Activated CD4-positive, alpha-beta T cell treated with anti-CD3 and anti-CD28 coated beads for 36 hours (primary cell): ENCODE measurements at regions of chr16 and their contacts with region 1.

Region 1: GRCh38 chr16:3305109-3306068 is at the starts of genes TIGD7 and ZNF75A:
- DNase-seq: peak; percentile 90
- ATAC-seq: peak; percentile 99
- H3K4me3 Mint-ChIP-seq: peak within 1 kb of the TSS; percentile 75
- H3K27ac Mint-ChIP-seq: peak within 1 kb of the TSS; percentile 84
- H3K4me1 Mint-ChIP-seq: peaks cover 15% of the 10 kb centered on the region
- H3K27me3 Mint-ChIP-seq: no peaks in the 10 kb centered on the region
- total RNA-seq, gene TIGD7: 2.9 TPM
- total RNA-seq, gene ZNF75A: 23.2 to 27.4 TPM

Region 2: GRCh38 chr16:3134564-3135417 is 170.6 kb before region 1 on chr16 and contains the start of gene ZNF213:
- CTCF ChIA-PET with region 1: no interaction called
- POLR2A ChIA-PET with region 1: no interaction called
- intact Hi-C with region 1: no loop called
- DNase-seq: peak; percentile 96
- ATAC-seq: peak; percentile 97
- H3K4me3 Mint-ChIP-seq: peak within 1 kb of the TSS; percentile 98
- H3K27ac Mint-ChIP-seq: peak within 1 kb of the TSS; percentile 95
- H3K4me1 Mint-ChIP-seq: peaks cover 30% of the 10 kb centered on the region
- H3K27me3 Mint-ChIP-seq: no peaks in the 10 kb centered on the region
- total RNA-seq, gene ZNF213: 7.6 to 8.3 TPM

Region 3: DNA sequence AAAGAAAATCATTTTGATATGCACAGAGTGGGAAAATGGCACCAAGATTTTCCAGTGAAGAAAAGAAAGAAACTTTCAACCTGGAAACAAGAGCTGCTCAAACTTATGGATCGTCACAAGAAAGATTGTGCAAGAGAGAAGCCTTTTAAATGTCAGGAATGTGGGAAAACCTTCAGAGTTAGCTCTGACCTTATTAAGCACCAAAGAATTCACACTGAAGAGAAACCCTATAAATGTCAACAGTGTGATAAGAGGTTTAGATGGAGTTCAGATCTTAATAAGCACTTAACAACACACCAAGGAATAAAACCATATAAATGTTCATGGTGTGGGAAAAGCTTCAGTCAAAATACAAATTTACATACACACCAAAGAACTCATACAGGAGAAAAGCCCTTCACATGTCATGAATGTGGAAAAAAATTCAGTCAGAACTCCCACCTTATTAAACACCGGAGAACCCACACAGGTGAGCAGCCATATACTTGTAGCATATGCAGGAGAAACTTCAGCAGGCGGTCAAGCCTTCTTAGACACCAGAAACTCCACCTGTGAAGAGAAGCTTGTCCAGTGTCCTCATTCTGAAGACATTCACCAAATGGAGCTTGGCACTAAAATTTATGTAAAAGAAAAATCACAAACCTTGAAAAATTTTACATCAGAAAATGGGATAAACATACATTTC is 12.1 kb after region 1 on chr16:
- CTCF ChIA-PET with region 1: interaction called, 3 read pairs
- POLR2A ChIA-PET with region 1: no interaction called
- intact Hi-C with region 1: loop called in 1 of 2 experiments (anchors 1 kb)
- DNase-seq: no peak
- ATAC-seq: no peak
- H3K4me3 Mint-ChIP-seq: no peak overlapping the region
- H3K27ac Mint-ChIP-seq: no peak overlapping the region
- H3K4me1 Mint-ChIP-seq: no peaks in the 10 kb centered on the region
- H3K27me3 Mint-ChIP-seq: no peaks in the 10 kb centered on the region

Region 4: GRCh38 chr16:3364774-3365427 is 59.5 kb after region 1 on chr16:
- CTCF ChIA-PET with region 1: no interaction called
- POLR2A ChIA-PET with region 1: no interaction called
- intact Hi-C with region 1: loop called in 1 of 2 experiments (anchors 1 kb)
- DNase-seq: peak; percentile 94
- ATAC-seq: peak; percentile 98
- H3K4me3 Mint-ChIP-seq: peak overlapping the region; percentile 76
- H3K27ac Mint-ChIP-seq: peak overlapping the region; percentile 91
- H3K4me1 Mint-ChIP-seq: peaks cover 8% of the 10 kb centered on the region
- H3K27me3 Mint-ChIP-seq: peaks cover 6% of the 10 kb centered on the region

Region 5: GRCh38 chr16:3383045-3383448 is 77.7 kb after region 1 on chr16:
- CTCF ChIA-PET with region 1: no interaction called
- POLR2A ChIA-PET with region 1: no interaction called
- intact Hi-C with region 1: loop called in 1 of 2 experiments (anchors 5 kb)
- DNase-seq: no peak
- ATAC-seq: no peak
- H3K4me3 Mint-ChIP-seq: no peak overlapping the region
- H3K27ac Mint-ChIP-seq: no peak overlapping the region
- H3K4me1 Mint-ChIP-seq: no peaks in the 10 kb centered on the region
- H3K27me3 Mint-ChIP-seq: no peaks in the 10 kb centered on the region

Region 6: DNA sequence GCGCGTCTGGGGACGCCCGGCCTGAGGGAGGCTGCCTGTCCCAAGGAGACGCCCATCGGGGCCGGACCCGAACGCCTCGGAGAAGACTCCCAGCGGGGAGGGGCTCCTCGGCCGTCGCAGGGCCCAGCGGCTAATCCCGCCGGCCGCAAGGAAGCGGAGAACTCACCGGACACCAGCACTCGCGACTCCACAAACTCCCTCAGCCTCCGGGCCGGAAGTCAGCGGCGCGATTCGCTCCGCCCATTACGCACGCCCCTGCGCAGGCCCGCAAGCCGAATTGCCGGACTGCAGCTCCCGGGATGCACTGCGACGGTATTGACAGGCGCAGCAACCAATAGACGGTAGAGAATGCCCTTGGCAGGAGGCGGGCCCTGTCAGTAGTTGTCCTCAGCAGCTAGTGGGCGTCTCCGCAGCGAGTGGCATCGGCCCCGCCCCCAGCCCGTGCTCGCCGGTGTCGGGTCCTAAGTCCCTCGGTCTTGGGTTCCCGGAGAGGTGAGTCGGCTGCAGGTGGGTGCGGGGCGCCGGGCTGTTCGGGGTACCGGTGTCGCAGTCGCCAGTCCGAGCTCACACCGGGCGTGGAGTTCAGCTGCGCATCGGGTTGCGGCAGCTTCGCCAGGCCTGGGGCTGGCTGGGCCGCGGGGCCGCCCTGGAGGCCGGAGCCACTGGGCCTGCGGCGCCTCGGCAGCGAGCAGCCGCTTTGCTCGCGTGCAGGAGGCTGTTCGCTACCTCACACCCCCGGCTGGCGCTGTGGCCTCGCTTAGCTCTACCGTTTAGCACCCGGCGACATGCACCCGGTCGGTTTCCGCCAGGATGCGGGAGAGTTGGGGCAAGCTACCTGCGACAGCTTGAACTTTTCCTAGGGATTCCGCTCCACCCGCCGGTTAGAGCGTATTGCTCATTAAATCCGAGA is 95.6 kb after region 1 on chr16 and contains the starts of genes ZNF174 and ZSCAN32:
- CTCF ChIA-PET with region 1: no interaction called
- POLR2A ChIA-PET with region 1: no interaction called
- intact Hi-C with region 1: loop called in 1 of 2 experiments (anchors 1 kb)
- DNase-seq: peak; percentile 99
- ATAC-seq: peak; percentile 99
- H3K4me3 Mint-ChIP-seq: peak within 1 kb of the TSS; percentile 91
- H3K27ac Mint-ChIP-seq: peak within 1 kb of the TSS; percentile 83
- H3K4me1 Mint-ChIP-seq: peaks cover 49% of the 10 kb centered on the region
- H3K27me3 Mint-ChIP-seq: no peaks in the 10 kb centered on the region
- total RNA-seq, gene ZNF174: 7.4 to 9.5 TPM
- total RNA-seq, gene ZSCAN32: 15.7 to 17.4 TPM